PC-3 (cell line): ENCODE measurements at regions of chr9 and their contacts with region 1.

Region 1: GRCh38 chr9:24793787-24794186 is 248.1 kb upstream of the IZUMO3 start:
- DNase-seq: peak; percentile 54
- ATAC-seq: peak; percentile 93
- H3K4me3 ChIP-seq: no peak overlapping the region
- H3K27ac ChIP-seq: peak overlapping the region; percentile 49
- H3K4me1 ChIP-seq: peaks cover 5% of the 10 kb centered on the region; the same call in 1 of the 2 replicates
- H3K27me3 ChIP-seq: no peaks in the 10 kb centered on the region
- CTCF ChIP-seq: no peak

Region 2: GRCh38 chr9:24413651-24414050 is 380.1 kb before region 1 on chr9:
- CTCF ChIA-PET with region 1: no interaction called
- POLR2A ChIA-PET with region 1: no interaction called
- intact Hi-C with region 1: loop called (anchors 10 kb)
- DNase-seq: peak; percentile 56
- ATAC-seq: peak; percentile 74
- H3K4me3 ChIP-seq: no peak overlapping the region
- H3K27ac ChIP-seq: 0 out of 2 replicates have a peak overlapping the region, but pooled peaks have one; percentile 2
- H3K4me1 ChIP-seq: peaks cover 3% of the 10 kb centered on the region; the same call in 1 of the 2 replicates
- H3K27me3 ChIP-seq: no peaks in the 10 kb centered on the region
- CTCF ChIP-seq: no peak

Region 3: GRCh38 chr9:24614070-24614469 is 179.7 kb before region 1 on chr9:
- CTCF ChIA-PET with region 1: no interaction called
- POLR2A ChIA-PET with region 1: no interaction called
- intact Hi-C with region 1: no loop called
- DNase-seq: peak; percentile 6
- ATAC-seq: peak; percentile 50; the same call in 1 of the 2 replicates
- H3K4me3 ChIP-seq: no peak overlapping the region
- H3K27ac ChIP-seq: no peak overlapping the region
- H3K4me1 ChIP-seq: no peaks in the 10 kb centered on the region
- H3K27me3 ChIP-seq: no peaks in the 10 kb centered on the region
- CTCF ChIP-seq: peak; percentile 41

Region 4: DNA sequence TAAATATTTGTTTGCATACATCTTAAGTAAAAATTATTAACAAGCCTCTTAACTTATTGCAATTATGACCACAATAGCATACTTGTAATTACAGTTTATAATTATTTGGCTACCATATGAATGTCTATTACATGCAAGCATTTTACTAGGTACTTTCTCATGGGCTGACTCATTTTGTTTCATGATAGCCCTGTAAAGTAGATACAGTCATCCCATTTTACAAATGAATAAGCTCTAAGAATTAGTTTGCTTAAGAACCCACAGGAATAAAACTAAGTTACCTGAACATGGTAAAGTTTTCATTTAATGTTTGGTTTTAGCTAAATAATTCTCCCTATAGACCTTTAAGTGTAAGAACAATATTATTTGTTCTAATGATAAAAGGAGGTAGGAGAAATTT is 121.5 kb before region 1 on chr9:
- CTCF ChIA-PET with region 1: no interaction called
- POLR2A ChIA-PET with region 1: no interaction called
- intact Hi-C with region 1: loop called (anchors 5 kb)
- DNase-seq: peak; percentile 21
- ATAC-seq: peak; percentile 96
- H3K4me3 ChIP-seq: no peak overlapping the region
- H3K27ac ChIP-seq: peak overlapping the region; percentile 59
- H3K4me1 ChIP-seq: no peaks in the 10 kb centered on the region
- H3K27me3 ChIP-seq: no peaks in the 10 kb centered on the region
- CTCF ChIP-seq: no peak

Region 5: GRCh38 chr9:24698881-24699518 is 94.8 kb before region 1 on chr9:
- CTCF ChIA-PET with region 1: no interaction called
- POLR2A ChIA-PET with region 1: no interaction called
- intact Hi-C with region 1: no loop called
- DNase-seq: no peak
- ATAC-seq: no peak; the same call in 1 of the 2 replicates
- H3K4me3 ChIP-seq: peak overlapping the region; percentile 42
- H3K27ac ChIP-seq: no peak overlapping the region
- H3K4me1 ChIP-seq: no peaks in the 10 kb centered on the region
- H3K27me3 ChIP-seq: no peaks in the 10 kb centered on the region
- CTCF ChIP-seq: no peak

Region 6: GRCh38 chr9:24879591-24879990 is 85.8 kb after region 1 on chr9:
- CTCF ChIA-PET with region 1: no interaction called
- POLR2A ChIA-PET with region 1: no interaction called
- intact Hi-C with region 1: loop called (anchors 1 kb)
- DNase-seq: peak; percentile 41
- ATAC-seq: peak; percentile 63
- H3K4me3 ChIP-seq: no peak overlapping the region
- H3K27ac ChIP-seq: peak overlapping the region; percentile 70
- H3K4me1 ChIP-seq: no peaks in the 10 kb centered on the region; the same call in 1 of the 2 replicates
- H3K27me3 ChIP-seq: no peaks in the 10 kb centered on the region
- CTCF ChIP-seq: no peak